ENCODE measurements at regions of chr18 and their contacts with region 1.

Region 1: GRCh38 chr18:45664824-45665763 is 49.8 kb downstream of the SLC14A2 start:
- DNase-seq: no peak
- H3K4me3 ChIP-seq: no peak overlapping the region
- H3K27ac ChIP-seq: peak overlapping the region; percentile 58
- H3K4me1 ChIP-seq: peaks cover 24% of the 10 kb centered on the region
- H3K27me3 ChIP-seq: no peaks in the 10 kb centered on the region
- CTCF ChIP-seq: peak; percentile 97

Region 2: GRCh38 chr18:46051731-46052461 is 386.8 kb after region 1 on chr18:
- intact Hi-C with region 1: loop called (anchors 10 kb)
- DNase-seq: no peak
- H3K4me3 ChIP-seq: no peak overlapping the region
- H3K27ac ChIP-seq: no peak overlapping the region
- H3K4me1 ChIP-seq: peaks cover 9% of the 10 kb centered on the region
- H3K27me3 ChIP-seq: no peaks in the 10 kb centered on the region
- CTCF ChIP-seq: no peak